Ovary (tissue), 10 donors: ENCODE measurements at regions of chr19 and their contacts with region 1.

Region 1: GRCh38 chr19:15264061-15264932 is 32.0 kb upstream of the EPHX3 start:
- DNase-seq: peak; percentile 62 to 86 (median 81)
- H3K4me3 ChIP-seq: no peak overlapping the region
- H3K27ac ChIP-seq: peak overlapping the region; percentile 30 to 66
- H3K4me1 ChIP-seq: peaks cover 21% of the 10 kb centered on the region
- H3K27me3 ChIP-seq: no peaks in the 10 kb centered on the region
- CTCF ChIP-seq: peak; percentile 12 to 63 (median 56)
- EP300 ChIP-seq: no peak
- POLR2A ChIP-seq: no peak

Region 2: DNA sequence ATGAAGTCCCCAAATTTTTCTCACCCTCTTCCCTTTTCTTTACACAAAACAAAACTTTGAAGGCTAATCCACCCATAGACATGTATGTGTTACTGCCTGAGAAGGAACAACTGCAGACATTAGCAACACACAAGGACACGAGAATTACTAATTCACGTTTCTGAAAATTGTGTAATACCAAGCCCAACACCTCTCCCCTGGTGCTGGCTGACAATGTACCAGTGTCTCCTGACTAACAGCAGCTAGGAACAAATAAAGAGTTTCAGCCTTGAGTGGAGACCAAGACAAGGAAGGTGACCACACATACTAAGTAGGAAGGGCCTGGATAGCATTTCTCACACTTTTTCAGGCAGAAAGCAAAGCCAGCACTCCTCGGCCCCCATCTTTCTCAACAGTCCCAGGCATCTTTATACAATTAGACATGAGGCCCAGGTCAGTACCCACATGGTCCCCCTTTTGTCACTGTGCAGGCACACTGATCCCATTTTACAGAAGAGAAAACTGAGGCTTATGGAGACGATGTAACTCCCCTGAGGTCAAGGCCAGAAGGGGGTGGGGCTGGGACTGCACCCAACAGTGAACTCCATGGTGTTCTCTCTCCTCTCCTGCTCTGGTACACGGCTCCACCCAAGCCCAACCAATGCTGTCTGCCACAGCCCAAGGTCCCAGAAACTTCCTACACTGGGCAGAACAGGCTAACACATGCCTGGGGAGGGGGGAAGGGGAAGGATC is 59.4 kb after region 1 on chr19:
- intact Hi-C with region 1: loop called in 1 of 4 experiments (anchors 10 kb)
- DNase-seq: peak; percentile 45 to 82 (median 55)
- H3K4me3 ChIP-seq: no peak overlapping the region
- H3K27ac ChIP-seq: peak overlapping the region in 1 of 2 donors; percentile 10
- H3K4me1 ChIP-seq: peaks cover 40% of the 10 kb centered on the region
- H3K27me3 ChIP-seq: no peaks in the 10 kb centered on the region
- CTCF ChIP-seq: no peak
- EP300 ChIP-seq: no peak
- POLR2A ChIP-seq: no peak

Region 3: DNA sequence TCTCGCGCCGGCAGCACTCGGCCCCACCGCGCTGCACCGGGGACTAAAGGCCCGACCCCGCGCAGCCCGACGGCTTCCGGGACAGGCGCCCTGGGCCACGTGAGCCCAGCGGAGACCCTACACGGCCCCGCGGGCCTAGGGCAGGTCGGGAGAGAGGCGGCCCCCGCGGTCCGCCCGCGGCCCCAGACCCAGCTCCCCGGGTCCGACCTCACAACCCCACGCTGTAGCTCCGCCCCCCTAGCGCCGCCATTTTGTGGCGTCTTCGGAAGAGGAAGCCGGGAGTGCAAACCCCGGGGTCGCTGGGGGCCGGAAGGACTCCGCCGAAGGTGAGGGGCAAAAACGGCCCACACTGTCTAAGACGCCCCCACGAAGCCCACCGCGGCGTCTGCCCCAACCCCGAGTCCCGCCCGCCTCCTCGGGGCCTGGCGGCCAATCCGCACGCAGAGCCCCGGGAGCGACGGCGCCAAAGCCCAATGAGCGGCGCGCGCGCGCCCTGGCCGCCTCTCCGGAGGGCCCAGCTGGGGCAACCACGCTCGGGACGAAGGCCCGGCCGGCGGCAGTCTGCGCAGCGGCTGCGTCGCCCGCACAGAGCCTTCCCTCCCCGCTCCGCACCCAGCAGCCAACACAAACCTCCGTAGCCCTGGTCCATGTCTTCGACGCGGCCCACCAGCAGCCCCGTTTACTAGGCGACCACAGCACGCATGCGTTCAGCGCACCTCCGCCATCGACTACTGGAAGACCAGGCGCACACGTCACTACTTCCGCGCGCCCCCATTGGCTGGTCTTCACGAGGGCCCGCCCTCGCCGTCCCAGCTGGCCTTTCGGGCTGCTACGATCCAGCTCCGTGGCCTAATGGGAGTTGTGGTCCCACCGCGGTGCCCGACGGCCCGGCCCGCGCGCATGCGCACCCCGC is 115.0 kb after region 1 on chr19 and contains the start of gene AKAP8:
- intact Hi-C with region 1: loop called in 1 of 4 experiments (anchors 5 kb)
- DNase-seq: peak; percentile 98 to 99 (median 98)
- H3K4me3 ChIP-seq: peak within 1 kb of the TSS; percentile 97
- H3K27ac ChIP-seq: peak within 1 kb of the TSS; percentile 82 to 97
- H3K4me1 ChIP-seq: peaks cover 20% of the 10 kb centered on the region
- H3K27me3 ChIP-seq: no peaks in the 10 kb centered on the region
- CTCF ChIP-seq: no peak
- EP300 ChIP-seq: no peak
- POLR2A ChIP-seq: peak; percentile 91
- total RNA-seq, gene AKAP8: 19.1 to 53.3 (median 46.4) TPM

Region 4: GRCh38 chr19:15563325-15563794 is 299.1 kb after region 1 on chr19:
- intact Hi-C with region 1: loop called in 2 of 4 experiments (anchors 5 to 10 kb)
- DNase-seq: peak; percentile 46 to 78 (median 67)
- H3K4me3 ChIP-seq: no peak overlapping the region
- H3K27ac ChIP-seq: no peak overlapping the region
- H3K4me1 ChIP-seq: peaks cover 6% of the 10 kb centered on the region
- H3K27me3 ChIP-seq: no peaks in the 10 kb centered on the region
- CTCF ChIP-seq: no peak
- EP300 ChIP-seq: no peak
- POLR2A ChIP-seq: no peak